Activated CD4-positive, alpha-beta T cell treated with anti-CD3 and anti-CD28 coated beads for 36 hours (primary cell): ENCODE measurements at regions of chr9 and their contacts with region 1.

Region 1: GRCh38 chr9:100598641-100599145 is 20.8 kb downstream of the CAVIN4 start:
- DNase-seq: peak; percentile 87
- ATAC-seq: peak; percentile 87
- H3K4me3 Mint-ChIP-seq: peak overlapping the region; percentile 59
- H3K27ac Mint-ChIP-seq: peak overlapping the region; percentile 45
- H3K4me1 Mint-ChIP-seq: peaks cover 20% of the 10 kb centered on the region
- H3K27me3 Mint-ChIP-seq: no peaks in the 10 kb centered on the region

Region 2: GRCh38 chr9:99906403-99907207 is 692.1 kb before region 1 on chr9 and contains the start of gene STX17:
- CTCF ChIA-PET with region 1: no interaction called
- POLR2A ChIA-PET with region 1: no interaction called
- intact Hi-C with region 1: loop called in 1 of 2 experiments (anchors 10 kb)
- DNase-seq: peak; percentile 85
- ATAC-seq: peak; percentile 92
- H3K4me3 Mint-ChIP-seq: peak within 1 kb of the TSS; percentile 97
- H3K27ac Mint-ChIP-seq: peak within 1 kb of the TSS; percentile 96
- H3K4me1 Mint-ChIP-seq: peaks cover 26% of the 10 kb centered on the region
- H3K27me3 Mint-ChIP-seq: peaks cover 2% of the 10 kb centered on the region
- total RNA-seq, gene STX17: 32.8 to 35.2 TPM

Region 3: GRCh38 chr9:100352727-100353505 is 245.8 kb before region 1 on chr9 and contains the start of gene TEX10:
- CTCF ChIA-PET with region 1: no interaction called
- POLR2A ChIA-PET with region 1: no interaction called
- intact Hi-C with region 1: loop called (anchors 2 to 5 kb)
- DNase-seq: peak; percentile 93
- ATAC-seq: peak; percentile 93
- H3K4me3 Mint-ChIP-seq: peak within 1 kb of the TSS; percentile 95
- H3K27ac Mint-ChIP-seq: peak within 1 kb of the TSS; percentile 91
- H3K4me1 Mint-ChIP-seq: peaks cover 41% of the 10 kb centered on the region
- H3K27me3 Mint-ChIP-seq: no peaks in the 10 kb centered on the region
- total RNA-seq, gene TEX10: 24.8 to 27.5 TPM

Region 4: GRCh38 chr9:100472788-100473275 is 125.9 kb before region 1 on chr9 and contains the start of gene TMEFF1:
- CTCF ChIA-PET with region 1: interaction called, 6 read pairs
- POLR2A ChIA-PET with region 1: no interaction called
- intact Hi-C with region 1: loop called in 1 of 2 experiments (anchors 1 kb)
- DNase-seq: peak; percentile 81
- ATAC-seq: peak; percentile 87
- H3K4me3 Mint-ChIP-seq: peak within 1 kb of the TSS; percentile 52
- H3K27ac Mint-ChIP-seq: no peak within 1 kb of the TSS
- H3K4me1 Mint-ChIP-seq: peaks cover 8% of the 10 kb centered on the region
- H3K27me3 Mint-ChIP-seq: peaks cover 29% of the 10 kb centered on the region
- total RNA-seq, gene TMEFF1: 0.27 TPM in 1 of 2 experiments, not detected in the other

Region 5: DNA sequence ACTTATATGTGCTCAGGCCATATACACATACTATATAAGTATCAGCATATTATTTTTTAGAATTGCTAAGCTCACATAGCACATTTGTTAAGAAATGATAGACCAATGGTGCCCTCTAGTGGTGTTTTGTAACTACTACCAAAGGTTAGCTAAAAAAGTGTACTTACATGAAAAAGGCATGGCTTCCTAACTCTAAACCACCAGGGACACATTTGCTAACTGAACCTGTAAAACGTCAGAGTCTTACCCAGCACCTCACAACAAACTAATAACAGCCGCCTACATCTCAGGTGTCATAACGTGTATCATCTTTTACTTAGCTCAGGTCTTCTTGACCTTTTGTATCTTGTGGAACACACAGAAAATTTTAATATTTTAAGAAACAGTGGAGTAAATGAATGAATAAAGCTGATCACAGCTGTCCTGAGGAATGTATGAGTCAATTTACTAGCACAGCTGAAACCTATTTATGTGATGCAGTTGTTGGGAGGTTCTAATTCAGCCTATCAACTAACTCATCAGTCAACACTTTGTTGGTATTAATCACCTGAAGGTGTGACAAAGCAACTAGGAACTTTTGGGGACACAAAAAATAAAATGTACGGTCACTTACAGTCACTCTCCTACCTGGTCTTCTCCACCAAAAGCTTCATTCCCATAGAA is 713.2 kb after region 1 on chr9:
- CTCF ChIA-PET with region 1: interaction called, 22 read pairs
- POLR2A ChIA-PET with region 1: no interaction called
- intact Hi-C with region 1: loop called (anchors 1 kb)
- DNase-seq: no peak
- ATAC-seq: peak; percentile 61
- H3K4me3 Mint-ChIP-seq: no peak overlapping the region
- H3K27ac Mint-ChIP-seq: no peak overlapping the region
- H3K4me1 Mint-ChIP-seq: no peaks in the 10 kb centered on the region
- H3K27me3 Mint-ChIP-seq: peaks cover 6% of the 10 kb centered on the region